Endothelial cell of umbilical vein (primary cell): ENCODE measurements at regions of chr20 and their contacts with region 1.

Region 1: GRCh38 chr20:14337400-14338171 is at the start of gene FLRT3:
- DNase-seq: peak; percentile 95
- H3K4me3 ChIP-seq: peak within 1 kb of the TSS; percentile 30 to 65 (median 39)
- H3K27ac ChIP-seq: peak within 1 kb of the TSS; percentile 15
- H3K4me1 ChIP-seq: peaks cover 5% of the 10 kb centered on the region
- H3K27me3 ChIP-seq: peaks cover 0 to 2% of the 10 kb centered on the region in 2 experiments
- CTCF ChIP-seq: peak; percentile 74 to 88
- POLR2A ChIP-seq: no peak
- total RNA-seq, gene FLRT3: 0.09 and 0.13 TPM in 2 replicates

Region 2: GRCh38 chr20:14117768-14118167 is 219.8 kb before region 1 on chr20:
- CTCF ChIA-PET with region 1: no interaction called
- POLR2A ChIA-PET with region 1: no interaction called
- dilution Hi-C with region 1: no loop called
- intact Hi-C with region 1: no loop called
- DNase-seq: no peak
- H3K4me3 ChIP-seq: no peak overlapping the region
- H3K27ac ChIP-seq: no peak overlapping the region
- H3K4me1 ChIP-seq: no peaks in the 10 kb centered on the region
- H3K27me3 ChIP-seq: no peaks in the 10 kb centered on the region
- CTCF ChIP-seq: no peak
- POLR2A ChIP-seq: no peak

Region 3: DNA sequence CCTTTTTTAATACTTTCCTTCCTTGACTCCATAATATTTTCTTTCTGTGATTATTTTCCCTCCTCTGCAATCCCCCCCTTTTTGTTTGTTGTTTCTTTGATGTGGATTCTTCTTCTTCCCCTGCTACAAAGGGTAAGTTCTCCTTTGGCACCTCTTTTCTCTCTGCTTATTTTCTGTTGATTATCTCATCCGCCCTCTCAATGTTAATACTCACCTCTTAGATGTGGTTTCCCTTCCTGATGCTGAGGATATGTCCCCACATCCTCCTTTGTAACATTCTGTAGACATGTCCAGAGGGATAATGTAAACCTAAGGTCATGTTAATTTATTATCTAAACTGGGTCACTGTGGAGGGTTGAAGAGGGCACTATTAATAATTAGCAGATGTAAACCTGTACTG is 17.9 kb before region 1 on chr20:
- CTCF ChIA-PET with region 1: interaction called, 13 read pairs
- POLR2A ChIA-PET with region 1: no interaction called
- dilution Hi-C with region 1: no loop called
- intact Hi-C with region 1: no loop called
- DNase-seq: no peak
- H3K4me3 ChIP-seq: no peak overlapping the region
- H3K27ac ChIP-seq: no peak overlapping the region
- H3K4me1 ChIP-seq: no peaks in the 10 kb centered on the region
- H3K27me3 ChIP-seq: no peaks in the 10 kb centered on the region
- CTCF ChIP-seq: no peak
- POLR2A ChIP-seq: no peak

Region 4: DNA sequence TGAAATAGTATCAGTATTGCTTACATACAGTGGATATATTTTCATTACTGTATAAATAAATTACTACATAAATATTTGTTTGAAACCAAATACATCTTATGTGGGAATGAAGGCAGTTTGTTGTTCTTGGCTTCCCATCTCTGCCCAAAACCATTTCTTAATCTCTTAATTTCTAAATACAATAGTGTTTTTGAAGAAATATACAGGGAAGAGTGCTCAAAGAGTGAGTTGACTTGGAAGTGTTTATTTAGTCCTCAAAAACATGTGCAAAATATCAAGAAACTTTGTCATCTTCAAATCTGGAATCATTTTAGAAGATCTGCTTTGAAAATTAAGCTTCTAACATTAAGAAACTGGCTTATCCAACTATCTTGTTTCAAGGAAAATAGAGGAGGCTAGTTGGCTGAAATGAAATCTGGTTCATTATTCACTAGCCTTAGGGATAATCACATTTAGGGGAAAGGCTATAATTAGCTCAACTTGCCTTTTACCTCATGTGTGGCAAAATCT is 259.7 kb after region 1 on chr20:
- CTCF ChIA-PET with region 1: no interaction called
- POLR2A ChIA-PET with region 1: no interaction called
- dilution Hi-C with region 1: no loop called
- intact Hi-C with region 1: loop called (anchors 5 kb)
- DNase-seq: no peak
- H3K4me3 ChIP-seq: no peak overlapping the region
- H3K27ac ChIP-seq: no peak overlapping the region
- H3K4me1 ChIP-seq: no peaks in the 10 kb centered on the region
- H3K27me3 ChIP-seq: no peaks in the 10 kb centered on the region
- CTCF ChIP-seq: no peak
- POLR2A ChIP-seq: no peak

Region 5: GRCh38 chr20:14963262-14963663 is 625.7 kb after region 1 on chr20:
- CTCF ChIA-PET with region 1: interaction called, 5 read pairs
- POLR2A ChIA-PET with region 1: no interaction called
- dilution Hi-C with region 1: no loop called
- intact Hi-C with region 1: loop called (anchors 5 kb)
- DNase-seq: peak; percentile 90
- H3K4me3 ChIP-seq: peak overlapping the region in 1 of 3 experiments; percentile 3
- H3K27ac ChIP-seq: peak overlapping the region; percentile 70
- H3K4me1 ChIP-seq: peaks cover 14% of the 10 kb centered on the region
- H3K27me3 ChIP-seq: no peaks in the 10 kb centered on the region
- CTCF ChIP-seq: no peak
- POLR2A ChIP-seq: no peak

Region 6: DNA sequence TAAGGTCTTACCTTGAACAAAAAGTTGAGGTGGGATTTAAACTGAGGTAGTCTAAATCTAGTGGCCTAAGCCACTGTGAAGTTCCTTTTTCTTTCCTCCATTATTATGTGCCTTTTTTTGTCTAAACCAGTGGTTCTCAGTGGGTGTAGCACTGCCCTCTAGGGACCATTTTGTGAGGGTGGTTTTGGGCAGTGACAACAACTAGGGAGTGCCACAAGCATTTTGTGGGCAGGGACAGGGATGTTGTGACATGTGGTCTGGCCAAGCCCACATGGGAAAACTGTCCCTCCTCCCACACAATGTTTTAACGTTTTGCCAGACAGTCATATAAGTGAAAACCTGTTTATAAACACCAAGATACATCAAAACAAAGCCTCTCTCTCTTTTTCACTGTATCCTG is 899.2 kb after region 1 on chr20:
- CTCF ChIA-PET with region 1: interaction called, 145 read pairs
- POLR2A ChIA-PET with region 1: no interaction called
- dilution Hi-C with region 1: no loop called
- intact Hi-C with region 1: loop called (anchors 1 kb)
- DNase-seq: peak; percentile 69
- H3K4me3 ChIP-seq: no peak overlapping the region
- H3K27ac ChIP-seq: no peak overlapping the region
- H3K4me1 ChIP-seq: no peaks in the 10 kb centered on the region
- H3K27me3 ChIP-seq: no peaks in the 10 kb centered on the region
- CTCF ChIP-seq: peak; percentile 70 to 71
- POLR2A ChIP-seq: no peak

Region 7: GRCh38 chr20:15654208-15654645 is 1316.6 kb after region 1 on chr20:
- CTCF ChIA-PET with region 1: interaction called, 35 read pairs
- POLR2A ChIA-PET with region 1: interaction called, 3 read pairs
- dilution Hi-C with region 1: no loop called
- intact Hi-C with region 1: loop called (anchors 1 kb)
- DNase-seq: peak; percentile 63
- H3K4me3 ChIP-seq: no peak overlapping the region
- H3K27ac ChIP-seq: no peak overlapping the region
- H3K4me1 ChIP-seq: no peaks in the 10 kb centered on the region
- H3K27me3 ChIP-seq: no peaks in the 10 kb centered on the region
- CTCF ChIP-seq: peak; percentile 54 to 64
- POLR2A ChIP-seq: no peak

Region 8: DNA sequence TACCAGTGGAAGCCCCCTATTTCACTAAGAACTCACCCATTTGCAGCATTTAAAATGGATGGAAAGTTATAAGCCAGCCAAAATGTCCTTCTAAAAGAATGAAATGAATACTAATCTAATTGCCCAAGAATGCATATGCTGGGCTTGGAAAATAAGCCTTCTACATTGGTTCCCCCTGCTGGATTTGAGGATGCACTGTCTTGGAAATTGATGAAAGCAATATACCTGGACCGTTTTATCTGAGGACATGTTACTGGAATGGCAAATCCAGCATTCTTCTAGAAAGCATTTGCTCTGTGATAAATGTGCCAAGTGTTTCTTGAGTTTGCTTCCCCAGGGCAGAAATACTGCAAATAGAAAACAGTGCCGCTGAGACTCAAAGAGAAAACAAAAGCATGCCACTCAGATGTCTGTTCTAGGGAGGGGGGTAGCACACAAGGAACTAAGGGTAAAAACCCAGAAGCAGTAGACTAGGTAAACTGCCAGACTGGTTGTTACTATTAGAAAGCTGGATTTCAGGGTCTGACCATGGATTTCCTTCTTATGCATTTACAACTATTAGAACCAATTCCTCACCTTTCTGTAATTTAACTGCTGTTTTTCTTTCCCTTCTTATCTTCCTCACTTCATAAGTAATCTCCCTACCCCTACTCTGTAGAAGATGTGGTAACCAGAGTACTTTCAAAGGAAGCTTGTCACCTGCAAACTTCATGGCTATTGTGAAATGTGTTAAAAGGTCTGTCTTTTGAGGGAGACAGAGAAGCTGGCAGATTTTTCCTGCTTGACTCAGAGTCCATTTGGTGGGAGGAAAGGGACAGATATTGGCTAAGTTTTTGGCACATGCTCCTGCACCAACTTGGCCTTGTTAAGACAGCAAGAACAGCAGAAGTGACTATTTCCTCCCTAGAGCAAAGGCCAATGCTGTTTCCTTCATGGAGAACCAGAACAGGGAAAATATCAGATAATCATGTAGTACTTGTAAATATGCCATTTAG is 1593.0 kb after region 1 on chr20:
- CTCF ChIA-PET with region 1: interaction called, 8 read pairs
- POLR2A ChIA-PET with region 1: no interaction called
- dilution Hi-C with region 1: no loop called
- intact Hi-C with region 1: loop called (anchors 10 kb)
- DNase-seq: peak; percentile 54
- H3K4me3 ChIP-seq: peak overlapping the region in 1 of 3 experiments; percentile 28
- H3K27ac ChIP-seq: no peak overlapping the region
- H3K4me1 ChIP-seq: no peaks in the 10 kb centered on the region
- H3K27me3 ChIP-seq: no peaks in the 10 kb centered on the region
- CTCF ChIP-seq: peak; percentile 17 to 50
- POLR2A ChIP-seq: no peak